Mammary epithelial cell (primary cell): ENCODE measurements at regions of chr20 and their contacts with region 1.

Region 1: DNA sequence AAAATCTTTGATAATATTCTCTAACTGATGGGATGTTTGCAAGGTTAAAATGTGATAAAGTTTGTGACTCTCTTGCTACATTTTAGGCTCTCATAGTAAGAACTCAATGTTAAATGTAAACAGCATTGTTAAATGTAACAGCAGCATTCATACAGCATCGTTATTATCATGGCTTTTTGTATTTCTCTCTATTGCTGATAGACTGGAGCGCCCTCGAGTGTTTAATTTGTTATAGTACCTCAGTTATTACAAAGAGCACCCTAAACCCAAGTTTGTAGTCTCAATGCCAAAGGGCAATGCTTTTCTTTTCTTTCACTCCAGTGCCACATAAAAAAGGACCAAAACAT is 14.9 kb upstream of the TTPAL start:
- DNase-seq: peak; percentile 27
- H3K4me3 ChIP-seq: no peak overlapping the region
- H3K27ac ChIP-seq: no peak overlapping the region
- H3K4me1 ChIP-seq: peaks cover 11% of the 10 kb centered on the region
- H3K27me3 ChIP-seq: no peaks in the 10 kb centered on the region
- CTCF ChIP-seq: peak; percentile 50 to 65

Region 2: GRCh38 chr20:44217342-44218092 is 243.3 kb before region 1 on chr20:
- CTCF ChIA-PET with region 1: no interaction called
- dilution Hi-C with region 1: no loop called
- in situ Hi-C with region 1: loop called (anchors 5 kb)
- intact Hi-C with region 1: no loop called
- DNase-seq: peak; percentile 52
- H3K4me3 ChIP-seq: no peak overlapping the region
- H3K27ac ChIP-seq: no peak overlapping the region
- H3K4me1 ChIP-seq: peaks cover 7% of the 10 kb centered on the region
- H3K27me3 ChIP-seq: no peaks in the 10 kb centered on the region
- CTCF ChIP-seq: peak; percentile 96 to 99

Region 3: GRCh38 chr20:44247586-44248409 is 213.0 kb before region 1 on chr20:
- CTCF ChIA-PET with region 1: no interaction called
- dilution Hi-C with region 1: loop called (anchors 10 kb)
- in situ Hi-C with region 1: no loop called
- intact Hi-C with region 1: no loop called
- DNase-seq: peak; percentile 5
- H3K4me3 ChIP-seq: no peak overlapping the region
- H3K27ac ChIP-seq: no peak overlapping the region
- H3K4me1 ChIP-seq: no peaks in the 10 kb centered on the region
- H3K27me3 ChIP-seq: peaks cover 13% of the 10 kb centered on the region
- CTCF ChIP-seq: peak; percentile 16 to 25

Region 4: DNA sequence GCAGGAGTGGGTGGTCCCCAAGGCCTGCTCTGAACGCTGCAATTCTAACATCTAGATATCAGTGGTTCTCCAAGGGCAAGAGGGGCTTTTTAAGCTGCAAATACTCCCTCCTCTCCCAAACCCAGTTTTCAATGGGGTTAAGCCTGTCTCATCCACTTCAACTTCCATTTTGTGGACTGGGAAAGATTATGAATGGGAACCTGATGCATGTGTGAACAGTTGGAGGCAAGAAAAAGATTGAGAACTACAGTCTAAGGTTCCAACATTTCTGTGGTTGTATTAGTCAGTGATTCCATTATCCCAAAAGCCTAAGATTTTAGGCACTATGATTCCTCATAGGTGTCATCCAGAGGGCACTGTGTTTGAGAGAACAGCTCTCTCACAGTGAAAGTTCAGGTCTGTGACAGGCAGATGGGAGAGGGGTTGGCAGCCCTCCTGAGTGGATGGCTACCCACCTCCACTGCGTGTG is 51.6 kb before region 1 on chr20:
- CTCF ChIA-PET with region 1: no interaction called
- dilution Hi-C with region 1: no loop called
- in situ Hi-C with region 1: no loop called
- intact Hi-C with region 1: no loop called
- DNase-seq: peak; percentile 74
- H3K4me3 ChIP-seq: no peak overlapping the region
- H3K27ac ChIP-seq: peak overlapping the region; percentile 24
- H3K4me1 ChIP-seq: peaks cover 26% of the 10 kb centered on the region
- H3K27me3 ChIP-seq: no peaks in the 10 kb centered on the region
- CTCF ChIP-seq: no peak

Region 5: GRCh38 chr20:44609511-44610312 is 148.9 kb after region 1 on chr20:
- CTCF ChIA-PET with region 1: no interaction called
- dilution Hi-C with region 1: no loop called
- in situ Hi-C with region 1: no loop called
- intact Hi-C with region 1: no loop called
- DNase-seq: peak; percentile 83
- H3K4me3 ChIP-seq: peak overlapping the region in 1 of 3 experiments; percentile 38
- H3K27ac ChIP-seq: peak overlapping the region; percentile 79
- H3K4me1 ChIP-seq: peaks cover 17% of the 10 kb centered on the region
- H3K27me3 ChIP-seq: no peaks in the 10 kb centered on the region
- CTCF ChIP-seq: peak; percentile 99 to 100